T-cell (primary cell): ENCODE measurements at regions of chr9 and their contacts with region 1.

Region 1: GRCh38 chr9:133839822-133840329 is 101.7 kb upstream of the SARDH start:
- DNase-seq: no peak
- ATAC-seq: no peak
- H3K4me3 ChIP-seq: no peak overlapping the region
- H3K4me3 Mint-ChIP-seq: no peak overlapping the region
- H3K27ac ChIP-seq: no peak overlapping the region
- H3K27ac Mint-ChIP-seq: no peak overlapping the region
- H3K4me1 ChIP-seq: peaks cover 0 to 3% of the 10 kb centered on the region in 2 experiments
- H3K4me1 Mint-ChIP-seq: no peaks in the 10 kb centered on the region
- H3K27me3 ChIP-seq: peaks cover 0 to 6% of the 10 kb centered on the region in 2 experiments
- H3K27me3 Mint-ChIP-seq: peaks cover 3 to 5% of the 10 kb centered on the region in 2 donors

Region 2: GRCh38 chr9:132260846-132261245 is 1579.0 kb before region 1 on chr9:
- CTCF ChIA-PET with region 1: interaction called in 1 of 2 experiments, 11 read pairs
- POLR2A ChIA-PET with region 1: no interaction called
- DNase-seq: no peak
- ATAC-seq: no peak
- H3K4me3 ChIP-seq: no peak overlapping the region
- H3K4me3 Mint-ChIP-seq: no peak overlapping the region
- H3K27ac ChIP-seq: no peak overlapping the region
- H3K27ac Mint-ChIP-seq: peak overlapping the region in 1 of 2 donors; percentile 12
- H3K4me1 ChIP-seq: peaks cover 0 to 12% of the 10 kb centered on the region in 2 experiments
- H3K4me1 Mint-ChIP-seq: peaks cover 8 to 11% (median 9%) of the 10 kb centered on the region in 3 donors
- H3K27me3 ChIP-seq: no peaks in the 10 kb centered on the region
- H3K27me3 Mint-ChIP-seq: no peaks in the 10 kb centered on the region

Region 3: DNA sequence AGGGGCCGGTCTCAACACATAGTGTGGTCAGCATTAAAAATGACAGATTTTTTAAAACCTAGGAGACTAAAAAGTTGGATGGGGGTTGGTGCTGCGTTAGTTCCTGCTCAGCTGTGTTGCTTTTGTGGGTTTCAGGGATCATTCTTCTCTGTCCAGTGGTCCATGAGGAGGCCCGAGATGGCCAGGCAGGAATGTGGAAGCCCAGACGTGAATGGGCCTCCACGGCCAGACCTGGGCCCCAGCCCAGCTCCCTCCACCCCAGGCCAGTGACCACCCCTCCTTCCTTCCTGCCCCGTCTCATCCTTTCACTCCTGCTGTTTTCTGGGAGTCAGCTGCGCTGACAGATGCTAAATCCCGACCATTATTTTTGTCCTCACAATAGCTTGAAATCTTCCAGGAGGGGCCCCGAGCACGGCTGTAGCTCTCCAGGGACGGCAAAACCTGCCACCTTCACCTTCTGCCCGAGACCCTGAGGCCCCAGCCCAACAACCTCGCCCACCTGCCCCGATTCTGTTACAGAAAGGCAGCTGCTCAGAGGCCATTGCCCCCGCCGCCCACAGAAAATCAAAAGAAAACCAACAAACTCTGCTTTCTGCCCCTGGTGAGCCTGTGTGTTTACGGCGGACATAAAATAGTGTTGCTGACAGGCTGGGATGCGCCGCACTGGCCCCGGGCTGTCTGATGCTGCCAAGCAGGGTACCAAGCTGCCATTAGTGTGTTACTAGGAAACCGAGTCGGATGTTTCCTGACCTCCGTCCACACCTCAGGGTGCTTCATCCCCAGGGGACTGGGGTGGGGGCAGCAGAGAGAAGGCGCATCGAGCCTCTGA is 18.1 kb before region 1 on chr9:
- CTCF ChIA-PET with region 1: no interaction called
- POLR2A ChIA-PET with region 1: no interaction called
- DNase-seq: no peak
- ATAC-seq: no peak
- H3K4me3 ChIP-seq: no peak overlapping the region
- H3K4me3 Mint-ChIP-seq: no peak overlapping the region
- H3K27ac ChIP-seq: no peak overlapping the region
- H3K27ac Mint-ChIP-seq: no peak overlapping the region
- H3K4me1 ChIP-seq: no peaks in the 10 kb centered on the region
- H3K4me1 Mint-ChIP-seq: peaks cover 0 to 4% (median 0%) of the 10 kb centered on the region in 3 donors
- H3K27me3 ChIP-seq: peaks cover 0 to 7% of the 10 kb centered on the region in 2 experiments
- H3K27me3 Mint-ChIP-seq: no peaks in the 10 kb centered on the region